ENCODE measurements at regions of chr7 and their contacts with region 1.

Region 1: DNA sequence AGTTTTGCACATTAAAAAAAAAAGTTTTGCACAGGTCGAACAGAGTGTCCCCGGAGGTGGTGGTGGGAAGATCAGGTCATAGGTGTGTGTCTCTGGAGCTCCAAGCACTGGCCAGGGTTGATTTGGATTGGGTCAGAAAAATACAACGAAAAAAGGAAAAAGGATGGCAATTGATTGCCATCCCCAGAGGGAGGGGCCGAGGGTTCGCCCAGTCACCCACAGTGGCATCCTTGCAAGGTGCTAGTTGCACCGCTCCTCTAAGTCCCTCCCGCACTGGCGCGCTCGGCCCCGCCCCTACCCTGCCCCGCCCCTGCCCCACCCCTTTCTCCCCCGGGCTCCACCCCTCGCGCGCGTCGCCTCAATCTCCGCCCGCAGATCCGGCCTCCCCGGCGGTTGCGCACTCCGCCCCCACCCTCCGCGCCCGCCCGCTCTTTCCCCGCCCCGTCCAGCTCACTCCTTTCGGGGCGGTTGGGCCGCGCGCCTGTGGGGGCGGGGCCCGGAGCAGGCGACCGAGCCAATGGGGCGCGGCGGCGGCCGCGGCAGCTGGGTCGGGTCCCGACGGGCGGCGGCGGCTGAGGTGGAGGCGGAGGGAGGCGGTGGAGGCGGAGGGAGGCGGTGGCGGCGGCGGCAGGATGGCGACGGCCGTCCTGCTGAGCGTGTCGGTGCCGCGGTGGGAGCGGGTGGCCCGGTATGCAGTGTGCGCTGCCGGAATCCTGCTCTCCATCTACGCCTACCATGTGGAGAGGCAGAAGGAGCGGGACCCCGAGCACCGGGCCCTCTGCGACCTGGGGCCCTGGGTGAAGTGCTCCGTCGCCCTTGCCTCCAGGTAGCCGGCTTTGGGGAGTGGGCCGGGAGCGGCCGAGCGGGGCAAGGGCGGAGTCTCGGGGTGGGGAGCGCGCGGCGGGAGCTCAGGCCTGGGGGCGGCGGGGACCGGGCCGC is 31.5 kb upstream of the ERV3-1 start:
- DNase-seq: peak; percentile 88
- ATAC-seq: peak; percentile 97
- H3K4me3 ChIP-seq: peak overlapping the region; percentile 98
- H3K27ac ChIP-seq: peak overlapping the region; percentile 84
- H3K4me1 ChIP-seq: no peaks in the 10 kb centered on the region
- H3K27me3 ChIP-seq: no peaks in the 10 kb centered on the region
- CTCF ChIP-seq: no peak
- POLR2A ChIP-seq: peak; percentile 52
- RAD21 ChIP-seq: no peak

Region 2: DNA sequence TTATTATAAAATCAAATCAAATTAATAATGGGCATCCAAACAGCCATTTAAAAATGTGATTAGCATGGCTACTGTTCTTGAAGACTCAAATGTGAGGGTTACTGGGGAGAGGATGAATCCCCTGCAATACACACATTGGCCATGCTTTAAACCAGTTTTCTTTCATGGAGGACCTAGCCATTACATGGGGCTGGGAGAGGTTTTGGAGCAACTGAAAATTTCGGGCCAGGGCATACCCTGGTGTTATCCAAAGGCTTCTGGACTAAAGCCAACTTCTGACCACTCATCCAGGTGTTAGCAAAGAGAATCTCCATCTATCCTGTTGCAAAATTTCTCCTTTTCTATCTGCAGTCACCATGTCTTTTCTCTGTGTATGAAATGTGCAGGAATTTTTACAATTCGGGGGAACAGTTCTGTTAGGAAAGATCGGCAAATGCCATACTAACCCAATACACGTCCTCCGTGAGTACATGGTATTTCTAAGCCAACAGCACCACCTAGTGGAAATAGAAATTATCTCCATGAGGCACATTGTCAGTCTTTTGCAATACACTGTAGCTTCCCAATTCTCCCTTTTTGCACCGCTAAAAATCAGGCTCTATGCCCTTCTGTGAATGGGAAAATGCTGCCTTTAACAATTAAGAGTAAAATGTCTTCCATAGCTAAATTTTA is 419.1 kb before region 1 on chr7:
- CTCF ChIA-PET with region 1: no interaction called
- POLR2A ChIA-PET with region 1: no interaction called
- dilution Hi-C with region 1: no loop called
- in situ Hi-C with region 1: no loop called
- intact Hi-C with region 1: no loop called
- DNase-seq: peak; percentile 60
- ATAC-seq: peak; percentile 66; the same call in 1 of the 2 replicates
- H3K4me3 ChIP-seq: no peak overlapping the region
- H3K27ac ChIP-seq: no peak overlapping the region
- H3K4me1 ChIP-seq: no peaks in the 10 kb centered on the region
- H3K27me3 ChIP-seq: no peaks in the 10 kb centered on the region
- CTCF ChIP-seq: peak; percentile 51
- POLR2A ChIP-seq: no peak
- RAD21 ChIP-seq: peak; percentile 79

Region 3: GRCh38 chr7:64686493-64687184 is 351.4 kb before region 1 on chr7:
- CTCF ChIA-PET with region 1: no interaction called
- POLR2A ChIA-PET with region 1: no interaction called
- dilution Hi-C with region 1: no loop called
- in situ Hi-C with region 1: no loop called
- intact Hi-C with region 1: no loop called
- DNase-seq: no peak
- ATAC-seq: no peak
- H3K4me3 ChIP-seq: no peak overlapping the region
- H3K27ac ChIP-seq: no peak overlapping the region
- H3K4me1 ChIP-seq: no peaks in the 10 kb centered on the region
- H3K27me3 ChIP-seq: no peaks in the 10 kb centered on the region
- CTCF ChIP-seq: no peak
- POLR2A ChIP-seq: no peak
- RAD21 ChIP-seq: no peak

Region 4: DNA sequence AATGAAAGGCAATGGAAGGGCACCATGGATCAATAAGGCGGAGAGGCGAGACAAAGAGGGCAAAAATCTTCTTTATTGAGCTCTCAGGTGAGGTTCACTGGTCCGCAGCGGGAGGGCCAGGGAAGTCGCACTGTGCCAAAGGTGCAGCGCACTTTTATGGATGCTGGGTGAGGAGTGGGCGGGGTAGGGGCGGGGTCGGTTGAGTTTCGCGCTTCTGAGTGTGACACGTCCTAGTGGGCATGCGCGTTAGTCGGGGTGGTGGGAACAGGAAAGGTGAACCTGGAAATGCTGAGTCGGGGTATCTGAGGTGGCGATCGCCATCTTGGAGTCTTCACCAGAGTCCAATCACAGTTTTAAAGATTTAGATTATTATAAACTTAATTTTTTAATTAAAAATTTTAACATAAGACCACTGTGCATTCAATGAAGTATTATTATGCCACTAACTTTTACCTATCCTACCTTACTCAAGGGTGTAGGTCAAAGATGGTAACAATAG is 198.1 kb before region 1 on chr7:
- CTCF ChIA-PET with region 1: no interaction called
- POLR2A ChIA-PET with region 1: interaction called, 18 read pairs
- dilution Hi-C with region 1: no loop called
- in situ Hi-C with region 1: no loop called
- intact Hi-C with region 1: no loop called
- DNase-seq: no peak
- ATAC-seq: no peak
- H3K4me3 ChIP-seq: no peak overlapping the region
- H3K27ac ChIP-seq: no peak overlapping the region
- H3K4me1 ChIP-seq: no peaks in the 10 kb centered on the region
- H3K27me3 ChIP-seq: no peaks in the 10 kb centered on the region
- CTCF ChIP-seq: no peak
- POLR2A ChIP-seq: no peak
- RAD21 ChIP-seq: no peak

Region 5: DNA sequence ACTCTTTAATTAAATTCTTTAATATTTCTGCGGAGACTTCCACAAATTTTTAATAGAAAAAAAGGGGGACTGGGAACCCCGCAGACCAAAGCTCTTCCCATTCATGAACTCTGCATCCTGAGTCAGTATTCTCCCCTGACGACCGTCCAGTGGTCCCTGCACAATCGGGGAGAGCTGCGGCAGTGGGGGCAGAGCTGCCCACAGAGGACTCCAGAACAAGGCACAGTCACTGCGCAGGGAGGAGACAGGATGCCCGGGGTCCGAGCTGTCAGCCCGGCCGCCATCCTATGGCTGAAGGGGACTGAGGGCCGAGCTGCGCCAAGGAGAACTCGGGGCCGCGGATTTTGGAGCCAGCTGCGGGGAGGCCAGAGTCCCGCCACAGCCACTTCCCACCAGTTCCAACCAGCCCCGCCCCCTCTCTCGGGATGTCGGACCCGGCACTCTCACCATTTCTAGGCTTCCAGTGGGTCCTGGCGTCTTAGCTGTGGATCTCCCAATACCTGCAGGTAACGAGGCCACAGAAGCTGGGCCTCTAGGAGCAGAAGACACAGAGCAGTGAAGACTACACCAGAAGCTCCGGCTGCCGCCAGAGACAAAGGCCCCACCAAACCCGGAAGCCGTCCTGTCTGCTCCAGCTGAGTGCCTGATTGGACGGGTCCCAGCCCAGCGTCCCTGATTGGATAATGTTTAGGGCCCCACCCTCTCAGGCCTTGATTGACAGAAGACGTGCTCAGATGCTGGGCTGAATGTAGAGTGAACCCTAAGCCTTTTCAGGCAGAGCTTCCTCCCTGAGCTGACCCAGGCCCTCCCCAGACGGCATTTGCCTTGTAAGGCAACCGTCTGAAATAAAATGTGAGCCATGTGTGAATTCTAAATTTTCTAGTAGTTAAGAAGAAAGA is 31.7 kb before region 1 on chr7 and contains the start of gene ERV3-1:
- CTCF ChIA-PET with region 1: no interaction called
- POLR2A ChIA-PET with region 1: no interaction called
- dilution Hi-C with region 1: no loop called
- in situ Hi-C with region 1: no loop called
- intact Hi-C with region 1: loop called (anchors 2 kb)
- DNase-seq: peak; percentile 93
- ATAC-seq: peak; percentile 99
- H3K4me3 ChIP-seq: peak within 1 kb of the TSS; percentile 93
- H3K27ac ChIP-seq: peak within 1 kb of the TSS; percentile 95
- H3K4me1 ChIP-seq: 0 out of 2 replicates have a peak, but pooled peaks cover 1% of the 10 kb centered on the region
- H3K27me3 ChIP-seq: no peaks in the 10 kb centered on the region
- CTCF ChIP-seq: no peak
- POLR2A ChIP-seq: peak; percentile 96
- RAD21 ChIP-seq: no peak
- total RNA-seq, gene ERV3-1: 8.6 and 11.8 TPM in 2 replicates

Region 6: GRCh38 chr7:65609131-65609530 is 571.1 kb after region 1 on chr7:
- CTCF ChIA-PET with region 1: no interaction called
- POLR2A ChIA-PET with region 1: no interaction called
- dilution Hi-C with region 1: no loop called
- in situ Hi-C with region 1: no loop called
- intact Hi-C with region 1: no loop called
- DNase-seq: no peak
- ATAC-seq: no peak
- H3K4me3 ChIP-seq: no peak overlapping the region
- H3K27ac ChIP-seq: no peak overlapping the region
- H3K4me1 ChIP-seq: no peaks in the 10 kb centered on the region
- H3K27me3 ChIP-seq: no peaks in the 10 kb centered on the region
- CTCF ChIP-seq: no peak
- POLR2A ChIP-seq: no peak
- RAD21 ChIP-seq: no peak

Measured in IMR-90 (cell line).